ENCODE measurements at regions of chr20 and their contacts with region 1.

Region 1: GRCh38 chr20:38472513-38473372 is at the start of gene RALGAPB:
- DNase-seq: peak; percentile 94 to 100 (median 98)
- ATAC-seq: peak; percentile 96
- H3K4me3 ChIP-seq: peak within 1 kb of the TSS; percentile 73 to 75
- H3K4me3 Mint-ChIP-seq: peak within 1 kb of the TSS; percentile 90
- H3K27ac ChIP-seq: peak within 1 kb of the TSS; percentile 69 to 89
- H3K27ac Mint-ChIP-seq: peak within 1 kb of the TSS; percentile 92
- H3K4me1 ChIP-seq: peaks cover 33% of the 10 kb centered on the region
- H3K4me1 Mint-ChIP-seq: peaks cover 52% of the 10 kb centered on the region
- H3K27me3 ChIP-seq: no peaks in the 10 kb centered on the region
- H3K27me3 Mint-ChIP-seq: no peaks in the 10 kb centered on the region
- CTCF ChIP-seq: peak; percentile 48
- total RNA-seq, gene RALGAPB: 28.9 to 29.1 TPM

Region 2: DNA sequence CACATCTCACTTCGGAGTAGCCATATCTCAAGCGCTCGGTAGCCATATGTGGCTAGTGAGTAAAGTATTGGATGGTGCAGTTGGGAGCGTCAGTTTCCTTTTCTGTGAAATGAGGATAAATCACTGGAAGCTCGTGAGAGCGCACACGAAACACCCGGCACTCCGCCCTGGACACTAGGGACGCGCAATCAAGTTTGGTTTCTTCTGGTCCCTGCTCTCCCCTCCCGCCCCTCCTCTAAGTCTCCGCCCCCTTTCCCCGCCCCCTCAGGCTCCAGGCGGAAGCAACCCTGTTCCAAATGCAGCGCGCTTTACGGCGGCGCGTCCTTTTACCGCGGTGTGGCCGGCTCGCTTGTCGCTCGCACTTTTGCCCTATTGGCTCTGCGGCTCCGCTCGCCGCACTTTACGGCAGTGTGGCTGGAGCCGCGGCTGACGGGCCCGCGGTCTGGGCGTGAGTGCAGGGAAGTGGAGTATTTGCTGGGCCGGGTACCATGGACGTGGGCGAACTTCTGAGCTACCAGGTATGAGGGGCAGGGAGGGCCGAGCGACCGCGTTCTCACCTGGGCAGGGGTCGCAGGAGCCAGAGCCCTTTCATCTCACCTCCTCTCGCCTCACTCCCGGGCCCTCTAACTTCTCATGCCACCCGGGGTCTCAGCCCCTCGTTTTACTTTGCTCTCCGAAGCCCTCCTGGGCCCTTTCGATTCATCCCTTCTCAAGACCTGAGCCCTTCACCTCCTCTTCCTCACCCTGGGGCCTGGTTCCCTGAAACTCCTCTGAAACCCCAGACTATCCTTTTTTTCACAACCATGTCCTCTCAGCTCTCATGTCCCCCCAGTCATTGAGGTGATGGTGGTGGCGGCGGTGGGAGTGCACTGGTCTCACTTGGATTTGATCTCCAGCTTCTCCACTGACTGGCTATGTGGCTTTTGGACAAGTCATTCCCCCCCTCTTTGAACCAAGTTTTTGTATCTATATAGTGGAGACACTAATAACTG is 778.8 kb before region 1 on chr20 and contains the start of gene CTNNBL1:
- CTCF ChIA-PET with region 1: no interaction called
- POLR2A ChIA-PET with region 1: no interaction called
- intact Hi-C with region 1: loop called in 1 of 2 experiments (anchors 10 kb)
- DNase-seq: peak; percentile 91 to 98 (median 96)
- ATAC-seq: peak; percentile 99
- H3K4me3 ChIP-seq: peak within 1 kb of the TSS; percentile 76 to 85
- H3K4me3 Mint-ChIP-seq: peak within 1 kb of the TSS; percentile 98
- H3K27ac ChIP-seq: peak within 1 kb of the TSS; percentile 60 to 61
- H3K27ac Mint-ChIP-seq: peak within 1 kb of the TSS; percentile 90
- H3K4me1 ChIP-seq: peaks cover 12% of the 10 kb centered on the region
- H3K4me1 Mint-ChIP-seq: peaks cover 43% of the 10 kb centered on the region
- H3K27me3 ChIP-seq: peaks cover 0 to 7% of the 10 kb centered on the region in 2 experiments
- H3K27me3 Mint-ChIP-seq: peaks cover 16% of the 10 kb centered on the region
- CTCF ChIP-seq: no peak
- total RNA-seq, gene CTNNBL1: 22.4 to 26.8 TPM

Region 3: DNA sequence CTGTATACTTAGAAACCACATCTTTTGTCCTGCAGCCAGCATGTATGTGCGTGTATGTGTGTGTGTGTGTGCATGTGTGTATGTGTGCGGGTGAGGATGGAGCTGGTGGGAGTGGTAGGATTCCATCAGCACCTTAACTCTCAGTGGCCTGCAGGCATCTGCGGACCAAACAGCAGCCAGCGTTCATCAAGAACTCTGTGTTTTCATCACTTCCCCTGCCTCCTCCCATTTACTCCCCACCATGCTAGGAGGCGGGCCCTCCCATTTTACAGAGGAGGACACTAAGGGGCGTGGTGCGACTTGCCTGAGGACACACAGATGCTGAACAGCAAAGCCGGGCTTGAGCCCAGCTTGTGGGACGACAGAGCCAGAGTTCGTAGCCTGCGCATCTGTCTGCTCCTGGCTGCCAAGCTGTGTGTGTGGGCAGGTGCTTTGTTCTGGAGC is 560.9 kb before region 1 on chr20:
- CTCF ChIA-PET with region 1: no interaction called
- POLR2A ChIA-PET with region 1: no interaction called
- intact Hi-C with region 1: no loop called
- DNase-seq: no peak
- ATAC-seq: no peak
- H3K4me3 ChIP-seq: no peak overlapping the region
- H3K4me3 Mint-ChIP-seq: no peak overlapping the region
- H3K27ac ChIP-seq: no peak overlapping the region
- H3K27ac Mint-ChIP-seq: no peak overlapping the region
- H3K4me1 ChIP-seq: peaks cover 8% of the 10 kb centered on the region
- H3K4me1 Mint-ChIP-seq: peaks cover 18% of the 10 kb centered on the region
- H3K27me3 ChIP-seq: peaks cover 0 to 3% of the 10 kb centered on the region in 2 experiments
- H3K27me3 Mint-ChIP-seq: peaks cover 50% of the 10 kb centered on the region
- CTCF ChIP-seq: no peak

Region 4: DNA sequence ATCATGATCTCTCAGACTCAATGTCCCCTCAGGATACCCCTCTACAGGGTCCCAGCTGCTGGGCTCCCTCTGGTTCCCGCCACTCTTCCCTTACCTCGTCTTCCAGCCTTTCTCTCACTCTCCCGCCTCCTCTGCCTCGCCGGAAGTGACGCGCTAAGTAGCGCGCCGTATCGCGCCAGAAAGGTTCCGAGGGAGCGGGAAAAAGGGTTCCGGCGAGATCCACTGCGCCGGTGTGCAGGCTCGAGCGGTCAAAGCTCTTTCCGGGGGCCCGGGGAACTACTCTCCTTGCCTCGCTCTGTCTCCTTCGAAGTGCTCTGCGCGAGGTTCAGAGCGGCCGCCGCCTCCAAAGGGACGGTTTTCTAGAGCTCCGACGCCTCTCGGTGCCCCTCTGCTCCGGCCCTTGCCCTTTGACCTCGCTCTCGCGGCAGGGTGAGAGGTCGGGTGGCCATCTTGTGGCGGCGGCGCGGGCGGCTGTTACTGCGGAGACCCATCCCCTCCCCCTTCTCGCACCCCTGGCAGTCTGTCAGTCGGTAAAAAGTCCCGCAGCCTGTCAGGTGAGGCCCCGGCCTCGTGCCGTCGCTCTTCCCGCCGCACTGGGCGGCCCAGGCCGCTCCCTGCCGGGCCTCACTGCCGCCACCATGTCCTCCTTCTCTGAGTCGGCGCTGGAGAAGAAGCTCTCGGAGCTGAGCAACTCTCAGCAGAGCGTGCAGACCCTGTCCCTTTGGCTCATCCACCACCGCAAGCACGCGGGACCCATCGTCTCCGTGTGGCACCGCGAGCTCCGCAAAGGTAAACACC is 439.2 kb before region 1 on chr20 and contains the starts of genes RPRD1B and TTI1:
- CTCF ChIA-PET with region 1: no interaction called
- POLR2A ChIA-PET with region 1: no interaction called
- intact Hi-C with region 1: loop called in 1 of 2 experiments (anchors 10 kb)
- DNase-seq: peak; percentile 77 to 95 (median 88)
- ATAC-seq: peak; percentile 86
- H3K4me3 ChIP-seq: peak within 1 kb of the TSS; percentile 84 to 94
- H3K4me3 Mint-ChIP-seq: peak within 1 kb of the TSS; percentile 98
- H3K27ac ChIP-seq: peak within 1 kb of the TSS; percentile 92 to 98
- H3K27ac Mint-ChIP-seq: peak within 1 kb of the TSS; percentile 98
- H3K4me1 ChIP-seq: peaks cover 51% of the 10 kb centered on the region
- H3K4me1 Mint-ChIP-seq: peaks cover 73% of the 10 kb centered on the region
- H3K27me3 ChIP-seq: no peaks in the 10 kb centered on the region
- H3K27me3 Mint-ChIP-seq: no peaks in the 10 kb centered on the region
- CTCF ChIP-seq: no peak
- total RNA-seq, gene RPRD1B: 73.3 to 79.4 TPM
- total RNA-seq, gene TTI1: 12.6 to 15.7 TPM

Region 5: DNA sequence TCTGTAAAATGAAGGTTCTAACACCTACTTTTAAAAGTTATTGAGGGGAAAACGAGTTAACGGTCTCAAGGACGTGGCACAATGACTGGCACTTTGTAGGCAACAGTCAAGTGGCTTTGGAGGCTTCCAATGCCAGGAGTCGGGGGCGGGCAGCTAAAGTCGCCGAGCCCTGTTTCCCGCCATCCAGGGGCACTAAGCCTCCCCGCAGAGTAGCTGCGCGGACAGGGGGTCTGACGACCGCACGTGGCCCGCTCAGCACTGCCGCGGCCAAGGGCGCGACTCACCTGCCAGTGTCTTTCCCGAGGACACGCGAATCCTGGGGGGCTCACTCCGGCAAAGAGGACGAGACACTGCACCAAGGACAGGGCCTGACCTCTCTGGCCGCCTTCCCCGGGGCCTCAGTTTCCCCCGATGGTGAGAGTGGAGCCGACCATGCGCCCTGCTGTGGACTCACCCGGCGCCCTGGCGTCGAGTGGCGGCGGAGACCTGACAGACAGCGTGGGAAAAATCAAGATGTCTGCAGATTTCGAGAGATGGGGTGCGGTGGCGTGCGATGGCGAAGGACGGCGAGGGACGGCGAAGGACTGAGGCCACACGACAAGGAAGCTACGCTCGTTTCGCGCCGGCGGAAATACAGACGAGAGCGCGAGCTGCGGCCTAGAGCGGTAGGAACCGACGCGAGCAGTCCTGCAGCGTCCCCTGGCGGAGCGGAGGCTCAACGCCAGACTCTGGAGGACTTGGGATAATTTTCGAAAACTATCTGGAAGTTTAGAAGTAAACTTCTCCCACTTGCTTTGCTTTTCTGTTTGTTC is 37.8 kb before region 1 on chr20 and contains the start of gene SNHG17:
- CTCF ChIA-PET with region 1: interaction called, 21 read pairs
- POLR2A ChIA-PET with region 1: interaction called, 23 read pairs
- intact Hi-C with region 1: loop called (anchors 1 kb)
- DNase-seq: peak; percentile 73 to 97 (median 88)
- ATAC-seq: peak; percentile 87
- H3K4me3 ChIP-seq: peak within 1 kb of the TSS; percentile 76 to 93
- H3K4me3 Mint-ChIP-seq: peak within 1 kb of the TSS; percentile 93
- H3K27ac ChIP-seq: peak within 1 kb of the TSS; percentile 81 to 88
- H3K27ac Mint-ChIP-seq: peak within 1 kb of the TSS; percentile 96
- H3K4me1 ChIP-seq: peaks cover 22% of the 10 kb centered on the region
- H3K4me1 Mint-ChIP-seq: peaks cover 40% of the 10 kb centered on the region
- H3K27me3 ChIP-seq: no peaks in the 10 kb centered on the region
- H3K27me3 Mint-ChIP-seq: peaks cover 10% of the 10 kb centered on the region
- CTCF ChIP-seq: peak; percentile 100
- total RNA-seq, gene SNHG17: 119 to 128 TPM

Region 6: GRCh38 chr20:38446441-38447209 is 26.1 kb before region 1 on chr20:
- CTCF ChIA-PET with region 1: interaction called, 26 read pairs
- POLR2A ChIA-PET with region 1: interaction called, 21 read pairs
- intact Hi-C with region 1: loop called (anchors 1 kb)
- DNase-seq: peak; percentile 84 to 96 (median 92)
- ATAC-seq: peak; percentile 97
- H3K4me3 ChIP-seq: peak overlapping the region; percentile 84
- H3K4me3 Mint-ChIP-seq: peak overlapping the region; percentile 88
- H3K27ac ChIP-seq: peak overlapping the region; percentile 65 to 83
- H3K27ac Mint-ChIP-seq: peak overlapping the region; percentile 94
- H3K4me1 ChIP-seq: peaks cover 19% of the 10 kb centered on the region
- H3K4me1 Mint-ChIP-seq: peaks cover 25% of the 10 kb centered on the region
- H3K27me3 ChIP-seq: no peaks in the 10 kb centered on the region
- H3K27me3 Mint-ChIP-seq: peaks cover 2% of the 10 kb centered on the region
- CTCF ChIP-seq: peak; percentile 99

Region 7: DNA sequence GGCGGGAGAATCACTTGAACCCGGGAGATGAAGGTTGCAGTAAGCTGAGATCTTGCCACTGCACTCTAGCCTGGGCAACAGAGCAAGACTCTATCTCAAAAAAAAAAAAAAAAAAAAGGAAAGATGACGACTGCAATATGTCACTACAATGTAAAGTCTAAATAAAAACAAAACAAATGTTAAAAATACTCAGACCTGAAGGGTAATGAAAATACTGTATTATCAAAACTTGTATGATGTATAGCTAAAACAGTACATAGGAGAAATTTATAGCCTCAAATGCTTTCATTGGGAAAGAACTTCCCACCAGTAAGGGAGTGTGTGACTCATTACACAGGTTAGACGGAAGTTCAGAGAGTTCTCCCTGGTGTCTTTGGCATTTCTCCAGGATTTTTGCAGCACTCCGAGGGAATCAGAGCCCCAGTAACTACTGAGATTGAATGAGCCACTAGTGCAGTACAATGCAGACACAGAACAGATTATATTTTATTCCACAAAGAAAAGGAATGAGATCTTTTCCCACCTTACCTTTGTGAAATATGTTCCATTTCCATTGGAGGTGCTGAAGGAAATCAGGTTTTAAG is 12.6 kb before region 1 on chr20:
- CTCF ChIA-PET with region 1: no interaction called
- POLR2A ChIA-PET with region 1: no interaction called
- intact Hi-C with region 1: no loop called
- DNase-seq: no peak
- ATAC-seq: no peak
- H3K4me3 ChIP-seq: no peak overlapping the region
- H3K4me3 Mint-ChIP-seq: no peak overlapping the region
- H3K27ac ChIP-seq: no peak overlapping the region
- H3K27ac Mint-ChIP-seq: no peak overlapping the region
- H3K4me1 ChIP-seq: no peaks in the 10 kb centered on the region
- H3K4me1 Mint-ChIP-seq: no peaks in the 10 kb centered on the region
- H3K27me3 ChIP-seq: no peaks in the 10 kb centered on the region
- H3K27me3 Mint-ChIP-seq: peaks cover 2% of the 10 kb centered on the region
- CTCF ChIP-seq: no peak

Region 8: GRCh38 chr20:38581013-38581412 is 108.3 kb after region 1 on chr20 and contains the start of gene ADIG:
- CTCF ChIA-PET with region 1: no interaction called
- POLR2A ChIA-PET with region 1: no interaction called
- intact Hi-C with region 1: no loop called
- DNase-seq: no peak
- ATAC-seq: no peak
- H3K4me3 ChIP-seq: no peak within 1 kb of the TSS
- H3K4me3 Mint-ChIP-seq: no peak within 1 kb of the TSS
- H3K27ac ChIP-seq: no peak within 1 kb of the TSS
- H3K27ac Mint-ChIP-seq: no peak within 1 kb of the TSS
- H3K4me1 ChIP-seq: no peaks in the 10 kb centered on the region
- H3K4me1 Mint-ChIP-seq: no peaks in the 10 kb centered on the region
- H3K27me3 ChIP-seq: no peaks in the 10 kb centered on the region
- H3K27me3 Mint-ChIP-seq: no peaks in the 10 kb centered on the region
- CTCF ChIP-seq: no peak
- total RNA-seq, gene ADIG: not detected

Region 9: DNA sequence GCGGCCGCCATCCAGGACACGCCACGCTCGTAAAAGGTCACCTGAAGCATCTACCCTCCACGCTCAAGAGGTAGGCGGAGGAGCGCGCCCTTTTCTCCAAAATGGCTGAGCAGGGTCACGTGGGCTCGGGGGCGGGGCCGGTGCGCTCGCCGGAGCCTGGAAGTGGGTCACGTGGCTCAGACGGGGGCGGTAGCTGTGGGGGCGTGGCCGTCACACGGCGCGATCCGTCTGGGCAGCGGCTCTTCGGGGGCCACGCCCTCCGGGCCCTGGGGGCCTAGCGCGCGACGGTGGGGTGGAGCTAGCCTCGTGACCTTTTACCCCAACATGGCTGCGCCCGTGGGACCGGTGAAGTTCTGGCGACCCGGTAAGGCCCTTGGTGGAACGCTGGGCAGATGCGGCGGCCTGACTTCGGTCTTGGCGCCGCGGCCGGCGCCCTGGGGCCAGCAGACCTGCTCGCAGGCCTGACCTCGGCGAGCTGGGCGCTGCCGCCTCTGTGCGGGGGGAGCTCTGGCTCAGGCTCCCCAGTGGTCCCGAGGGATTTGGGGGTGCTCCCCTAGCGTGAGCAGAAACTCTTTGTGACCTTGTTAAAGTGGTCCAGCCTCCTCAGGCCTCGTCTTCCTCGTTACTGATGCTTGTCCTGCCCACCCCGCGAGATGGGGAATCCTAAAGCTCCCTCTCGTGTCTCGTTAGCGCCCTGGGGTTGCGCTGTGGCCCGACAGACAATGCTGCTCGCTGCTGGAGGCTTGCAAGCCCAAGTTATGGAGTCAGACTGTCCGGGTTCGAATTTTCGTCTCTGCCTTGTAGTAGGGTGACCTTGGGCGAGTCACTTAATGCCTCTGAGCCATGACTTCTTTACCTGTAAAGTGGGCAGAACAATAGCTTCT is 489.5 kb after region 1 on chr20 and contains the start of gene DHX35:
- CTCF ChIA-PET with region 1: no interaction called
- POLR2A ChIA-PET with region 1: no interaction called
- intact Hi-C with region 1: loop called in 1 of 2 experiments (anchors 1 kb)
- DNase-seq: peak; percentile 96 to 100 (median 98)
- ATAC-seq: peak; percentile 99
- H3K4me3 ChIP-seq: peak within 1 kb of the TSS; percentile 83 to 97
- H3K4me3 Mint-ChIP-seq: peak within 1 kb of the TSS; percentile 94
- H3K27ac ChIP-seq: peak within 1 kb of the TSS; percentile 76 to 82
- H3K27ac Mint-ChIP-seq: peak within 1 kb of the TSS; percentile 97
- H3K4me1 ChIP-seq: peaks cover 19% of the 10 kb centered on the region
- H3K4me1 Mint-ChIP-seq: peaks cover 28% of the 10 kb centered on the region
- H3K27me3 ChIP-seq: no peaks in the 10 kb centered on the region
- H3K27me3 Mint-ChIP-seq: no peaks in the 10 kb centered on the region
- CTCF ChIP-seq: no peak
- total RNA-seq, gene DHX35: 8.5 to 8.8 TPM

Measured in CD8-positive, alpha-beta T cell (primary cell).